PC-9 (cell line): ENCODE measurements at regions of chr11 and their contacts with region 1.

Region 1: DNA sequence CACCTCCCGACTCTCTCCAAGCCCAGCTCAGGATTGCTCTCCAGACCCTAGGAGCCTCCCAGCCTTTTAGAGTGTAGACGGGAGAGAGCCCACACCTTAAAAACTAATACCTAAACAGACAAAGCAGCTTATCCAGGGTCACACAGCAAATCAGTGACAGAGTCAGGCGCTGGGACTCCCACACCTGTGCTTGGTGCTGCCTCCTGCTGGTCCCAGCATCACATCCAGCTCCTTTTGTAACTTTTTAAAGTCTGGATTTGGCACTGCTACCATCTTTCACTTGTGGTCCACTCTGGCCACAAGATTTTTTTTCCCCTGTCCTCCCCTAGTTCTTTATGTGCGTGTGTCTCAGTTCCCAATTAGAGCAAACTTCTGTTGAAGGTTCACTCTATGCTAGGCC is 4.7 kb downstream of the ANO1 start:
- DNase-seq: no peak
- H3K4me3 ChIP-seq: no peak overlapping the region
- H3K27ac ChIP-seq: peak overlapping the region; percentile 31
- H3K4me1 ChIP-seq: peaks cover 56% of the 10 kb centered on the region
- H3K27me3 ChIP-seq: no peaks in the 10 kb centered on the region
- CTCF ChIP-seq: peak; percentile 44

Region 2: DNA sequence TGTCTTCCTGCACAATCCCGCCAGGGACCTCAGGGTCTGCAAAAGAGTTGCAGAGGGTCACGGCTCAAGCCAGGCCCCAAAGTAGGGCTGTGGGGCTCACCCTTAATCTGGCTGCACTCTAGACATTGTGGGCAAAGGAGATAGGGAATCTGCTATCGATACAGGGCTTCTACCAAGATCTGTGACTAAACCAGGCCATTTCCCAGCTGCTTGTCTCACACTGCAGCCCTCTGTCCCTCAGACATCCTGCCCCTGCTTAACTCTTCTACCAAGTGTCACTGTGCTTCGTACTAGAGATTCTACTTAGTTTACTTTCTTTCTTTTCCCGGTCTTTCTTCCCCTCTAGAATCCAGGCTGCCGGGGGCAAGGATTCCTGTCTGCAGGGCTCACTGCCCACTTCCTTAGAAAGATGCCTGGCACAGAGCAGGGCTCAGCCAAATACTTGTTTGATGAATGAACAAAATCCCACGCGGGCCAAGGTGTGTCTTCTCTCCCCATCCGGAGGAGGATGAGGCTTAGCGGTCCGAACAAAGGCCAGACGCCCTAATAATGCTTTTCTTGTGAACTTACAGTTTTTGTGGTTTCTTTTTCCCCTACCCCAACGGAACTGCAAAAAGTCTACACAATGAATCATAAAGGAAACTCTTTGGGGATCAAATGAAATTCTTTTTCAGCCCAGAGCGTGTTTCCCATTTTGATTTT is 66.0 kb before region 1 on chr11:
- CTCF ChIA-PET with region 1: no interaction called
- POLR2A ChIA-PET with region 1: no interaction called
- intact Hi-C with region 1: loop called (anchors 2 kb)
- DNase-seq: peak; percentile 69 to 97
- H3K4me3 ChIP-seq: no peak overlapping the region; the same call in 1 of the 2 replicates
- H3K27ac ChIP-seq: peak overlapping the region; percentile 91
- H3K4me1 ChIP-seq: peaks cover 56% of the 10 kb centered on the region
- H3K27me3 ChIP-seq: no peaks in the 10 kb centered on the region
- CTCF ChIP-seq: no peak

Region 3: GRCh38 chr11:70048279-70049027 is 34.4 kb before region 1 on chr11:
- CTCF ChIA-PET with region 1: no interaction called
- POLR2A ChIA-PET with region 1: no interaction called
- intact Hi-C with region 1: loop called (anchors 2 kb)
- DNase-seq: peak; percentile 84 to 95
- H3K4me3 ChIP-seq: 0 out of 2 replicates have a peak overlapping the region, but pooled peaks have one; percentile 5
- H3K27ac ChIP-seq: peak overlapping the region; percentile 57
- H3K4me1 ChIP-seq: peaks cover 23% of the 10 kb centered on the region
- H3K27me3 ChIP-seq: no peaks in the 10 kb centered on the region
- CTCF ChIP-seq: peak; percentile 76

Region 4: DNA sequence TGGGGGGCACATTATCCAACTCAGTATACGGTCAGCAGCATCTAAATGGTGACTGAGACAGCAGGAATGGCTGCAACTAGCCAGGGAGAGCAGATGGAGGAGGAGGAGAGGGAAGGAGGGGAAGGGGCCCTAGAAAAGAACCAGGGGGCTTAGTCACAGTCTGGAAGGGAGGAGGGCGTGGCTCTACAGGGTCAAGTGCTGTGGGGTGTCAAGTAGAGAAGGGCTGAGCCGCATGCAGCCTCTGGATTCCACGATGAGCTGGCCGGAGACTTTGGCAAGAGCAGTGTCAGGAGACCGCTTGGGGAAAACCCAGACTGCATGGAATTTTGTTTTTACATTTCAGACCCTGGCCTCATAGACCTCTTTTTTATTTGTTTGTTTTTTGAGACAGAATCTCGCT is 161.9 kb after region 1 on chr11:
- CTCF ChIA-PET with region 1: no interaction called
- POLR2A ChIA-PET with region 1: no interaction called
- intact Hi-C with region 1: loop called (anchors 5 kb)
- DNase-seq: peak; percentile 69 to 81
- H3K4me3 ChIP-seq: no peak overlapping the region
- H3K27ac ChIP-seq: peak overlapping the region; percentile 83
- H3K4me1 ChIP-seq: peaks cover 44% of the 10 kb centered on the region
- H3K27me3 ChIP-seq: no peaks in the 10 kb centered on the region
- CTCF ChIP-seq: no peak

Region 5: GRCh38 chr11:70603756-70604211 is 521.0 kb after region 1 on chr11:
- CTCF ChIA-PET with region 1: no interaction called
- POLR2A ChIA-PET with region 1: no interaction called
- intact Hi-C with region 1: no loop called
- DNase-seq: no peak
- H3K4me3 ChIP-seq: no peak overlapping the region
- H3K27ac ChIP-seq: no peak overlapping the region
- H3K4me1 ChIP-seq: no peaks in the 10 kb centered on the region
- H3K27me3 ChIP-seq: no peaks in the 10 kb centered on the region
- CTCF ChIP-seq: no peak